GM10248 (cell line): ENCODE measurements at regions of chr19 and their contacts with region 1.

Region 1: GRCh38 chr19:42295831-42296525 is 6.0 kb upstream of the PRR19 start:
- DNase-seq: peak; percentile 84
- CTCF ChIP-seq: peak; percentile 99

Region 2: DNA sequence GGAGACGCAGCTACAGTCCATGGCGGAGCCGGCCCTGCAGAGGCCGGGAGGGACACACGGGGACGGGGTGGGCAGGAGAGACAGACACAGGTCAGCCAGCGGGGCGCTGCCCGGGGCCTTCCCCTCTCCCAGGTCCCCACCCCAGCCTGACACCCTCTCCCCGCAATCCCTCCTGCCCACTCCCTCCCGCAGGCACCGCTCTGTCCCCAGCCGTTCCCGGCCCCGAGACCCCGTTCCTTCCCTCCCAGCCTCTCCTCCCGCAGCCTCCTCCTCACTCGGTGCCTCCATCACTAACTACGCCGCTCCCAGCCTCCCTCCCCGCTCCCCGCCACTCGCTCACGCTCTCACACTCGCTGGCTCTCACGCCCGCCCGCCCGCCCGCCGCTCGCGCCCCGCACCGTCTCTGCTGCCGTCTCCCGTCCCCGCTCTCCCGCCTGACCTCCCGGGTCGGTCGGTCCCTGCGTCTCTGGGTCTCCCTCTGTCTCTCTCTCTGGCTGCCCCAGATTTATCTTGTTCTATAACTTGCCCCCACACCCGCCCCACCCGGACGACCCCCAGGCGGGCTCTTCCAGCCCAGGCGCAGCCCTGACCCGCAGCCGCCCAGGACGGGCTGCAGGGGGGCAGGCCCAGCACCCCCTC is 383.0 kb before region 1 on chr19:
- CTCF ChIA-PET with region 1: no interaction called
- POLR2A ChIA-PET with region 1: no interaction called
- DNase-seq: no peak
- CTCF ChIP-seq: no peak

Region 3: GRCh38 chr19:42306646-42307045 is 10.7 kb after region 1 on chr19:
- CTCF ChIA-PET with region 1: interaction called, 13 read pairs
- POLR2A ChIA-PET with region 1: no interaction called
- DNase-seq: no peak
- CTCF ChIP-seq: no peak